ENCODE measurements at regions of chr17 and their contacts with region 1.

Region 1: GRCh38 chr17:76304226-76305134 is 3.6 kb downstream of the QRICH2 start:
- DNase-seq: no peak
- H3K4me3 ChIP-seq: no peak overlapping the region
- H3K4me1 ChIP-seq: no peaks in the 10 kb centered on the region
- H3K27me3 ChIP-seq: no peaks in the 10 kb centered on the region

Region 2: GRCh38 chr17:76182016-76182764 is 122.3 kb before region 1 on chr17:
- in situ Hi-C with region 1: no loop called
- DNase-seq: peak; percentile 82 to 94
- H3K4me3 ChIP-seq: no peak overlapping the region
- H3K4me1 ChIP-seq: peaks cover 6% of the 10 kb centered on the region
- H3K27me3 ChIP-seq: no peaks in the 10 kb centered on the region

Region 3: DNA sequence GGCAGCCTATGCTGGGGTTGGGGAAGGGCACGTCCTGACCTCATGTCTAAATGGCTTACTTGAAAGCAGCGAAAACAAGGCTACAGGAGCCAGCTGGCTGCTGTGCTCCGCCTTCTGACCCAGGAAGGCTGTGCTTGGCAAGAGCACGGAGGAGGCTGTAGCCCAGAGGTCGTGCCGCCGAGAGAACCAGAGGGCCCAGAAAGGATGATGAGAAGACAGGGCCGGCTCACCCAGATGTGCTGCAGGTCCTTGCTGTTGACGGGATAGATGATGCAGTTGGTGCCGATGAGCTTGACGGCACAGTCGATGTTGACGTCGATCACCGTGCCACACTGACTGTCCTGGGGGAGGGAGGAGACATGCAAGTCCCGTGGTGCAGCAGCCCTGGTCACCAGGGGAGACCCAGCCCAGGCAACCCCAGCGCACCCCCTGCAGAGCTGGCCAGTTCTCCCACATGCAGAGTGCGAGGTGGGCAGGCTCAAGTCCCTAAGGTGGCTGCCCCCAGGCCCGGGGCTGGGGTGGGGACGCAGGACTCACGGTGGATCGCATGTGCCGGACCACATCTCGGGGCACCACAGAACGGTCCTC is 100.6 kb after region 1 on chr17:
- in situ Hi-C with region 1: loop called (anchors 5 kb)
- DNase-seq: no peak
- H3K4me3 ChIP-seq: no peak overlapping the region
- H3K4me1 ChIP-seq: no peaks in the 10 kb centered on the region
- H3K27me3 ChIP-seq: no peaks in the 10 kb centered on the region

Measured in HAP-1 (cell line).